ENCODE measurements at regions of chr20 and their contacts with region 1.

Region 1: GRCh38 chr20:37178839-37179670 is at the starts of genes MROH8 and RPN2:
- DNase-seq: peak; percentile 93
- H3K4me3 Mint-ChIP-seq: peak within 1 kb of the TSS; percentile 99
- H3K27ac Mint-ChIP-seq: peak within 1 kb of the TSS; percentile 96
- H3K4me1 Mint-ChIP-seq: peaks cover 32% of the 10 kb centered on the region
- H3K27me3 Mint-ChIP-seq: peaks cover 4% of the 10 kb centered on the region
- total RNA-seq, gene MROH8: 1.1 and 1.3 TPM in 2 replicates
- total RNA-seq, gene RPN2: 223 and 234 TPM in 2 replicates

Region 2: DNA sequence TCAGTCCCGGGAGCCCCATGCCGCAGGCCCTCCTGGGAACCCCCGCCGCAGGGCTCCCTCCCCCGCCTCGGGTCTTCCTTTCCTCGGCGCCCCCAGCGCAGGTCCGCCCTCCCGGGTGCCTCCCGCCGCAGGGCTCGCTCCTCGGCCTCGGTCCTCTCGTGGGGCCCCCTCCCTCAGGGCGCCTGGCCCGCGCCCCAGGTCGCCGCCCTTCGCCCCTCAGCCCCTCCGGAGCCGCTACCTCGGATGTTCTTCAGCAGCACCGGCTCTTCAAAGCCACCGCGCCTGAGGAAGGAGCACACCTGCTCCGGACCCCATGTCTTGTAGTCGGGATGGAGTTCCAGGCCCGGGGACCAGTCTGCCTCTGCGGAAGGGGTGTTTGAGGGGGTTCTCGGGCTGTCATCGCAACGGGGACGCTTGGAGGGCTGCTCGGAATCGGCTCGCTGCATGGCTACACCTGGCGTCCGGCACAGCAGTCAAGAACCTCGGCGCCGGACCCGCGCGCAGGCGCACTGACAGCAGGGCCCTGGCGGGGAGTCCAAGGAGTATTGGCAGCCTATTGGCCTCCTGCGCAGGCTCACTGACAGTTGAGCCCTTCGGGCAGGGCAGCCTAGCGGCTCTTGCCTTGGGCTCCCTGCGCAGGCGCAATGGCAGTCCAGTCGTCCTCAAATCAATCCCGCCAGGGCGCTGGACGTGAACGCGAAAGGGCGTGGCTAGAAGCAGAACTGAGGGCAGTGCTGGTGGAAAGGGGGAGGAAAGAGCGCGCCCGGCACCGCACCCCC is 227.7 kb before region 1 on chr20 and contains the start of gene SAMHD1:
- intact Hi-C with region 1: loop called (anchors 5 kb)
- DNase-seq: peak; percentile 90
- H3K4me3 Mint-ChIP-seq: peak within 1 kb of the TSS; percentile 92
- H3K27ac Mint-ChIP-seq: peak within 1 kb of the TSS; percentile 91
- H3K4me1 Mint-ChIP-seq: peaks cover 47% of the 10 kb centered on the region
- H3K27me3 Mint-ChIP-seq: no peaks in the 10 kb centered on the region
- total RNA-seq, gene SAMHD1: 55.0 and 59.9 TPM in 2 replicates

Region 3: DNA sequence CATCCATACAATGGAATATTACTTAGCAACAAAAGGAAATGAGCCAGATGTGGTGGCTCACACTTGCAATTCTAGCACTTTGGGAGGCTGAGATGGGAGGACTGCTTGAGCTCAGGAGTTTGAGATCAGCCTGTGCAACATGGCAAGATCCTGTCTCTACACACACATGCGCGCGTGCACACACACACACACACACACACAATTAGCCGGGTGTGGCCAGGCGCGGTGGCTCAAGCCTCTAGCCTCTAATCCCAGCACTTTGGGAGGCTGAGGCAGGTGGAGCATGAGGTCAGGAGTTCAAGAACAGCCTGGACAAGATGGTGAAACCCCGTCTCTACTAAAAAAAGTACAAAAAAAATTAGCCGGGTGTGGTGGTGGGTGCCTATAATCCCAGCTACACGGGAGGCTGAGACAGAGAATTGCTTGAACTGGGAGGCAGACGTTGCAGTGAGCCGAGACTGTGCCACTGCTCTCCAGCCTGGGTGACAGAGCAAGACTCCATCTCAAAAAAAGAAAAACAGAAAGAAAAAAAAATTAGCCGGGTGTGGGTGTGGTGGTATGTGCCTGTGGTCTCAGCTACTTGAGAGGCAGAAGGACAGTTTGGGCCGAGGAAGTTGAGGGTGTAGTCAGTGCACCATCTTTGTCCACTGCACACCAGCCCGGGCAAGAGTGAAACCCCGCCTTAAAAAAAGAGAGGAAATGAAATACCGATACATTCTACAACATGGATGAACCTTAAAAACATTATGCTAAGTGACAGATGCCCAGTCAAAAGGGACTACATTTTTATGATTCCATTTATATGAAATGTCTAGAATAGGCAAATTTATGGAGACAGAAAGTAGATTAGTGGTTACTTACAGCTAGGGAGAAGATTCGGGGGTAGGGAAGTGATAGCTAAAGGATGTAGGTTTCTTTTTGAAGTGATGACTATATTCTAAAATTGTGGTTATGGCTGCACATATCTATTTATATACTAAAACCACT is 135.8 kb before region 1 on chr20:
- intact Hi-C with region 1: loop called (anchors 2 kb)
- DNase-seq: peak; percentile 40
- H3K4me3 Mint-ChIP-seq: peak overlapping the region; percentile 72
- H3K27ac Mint-ChIP-seq: peak overlapping the region; percentile 87
- H3K4me1 Mint-ChIP-seq: peaks cover 45% of the 10 kb centered on the region
- H3K27me3 Mint-ChIP-seq: no peaks in the 10 kb centered on the region

Region 4: DNA sequence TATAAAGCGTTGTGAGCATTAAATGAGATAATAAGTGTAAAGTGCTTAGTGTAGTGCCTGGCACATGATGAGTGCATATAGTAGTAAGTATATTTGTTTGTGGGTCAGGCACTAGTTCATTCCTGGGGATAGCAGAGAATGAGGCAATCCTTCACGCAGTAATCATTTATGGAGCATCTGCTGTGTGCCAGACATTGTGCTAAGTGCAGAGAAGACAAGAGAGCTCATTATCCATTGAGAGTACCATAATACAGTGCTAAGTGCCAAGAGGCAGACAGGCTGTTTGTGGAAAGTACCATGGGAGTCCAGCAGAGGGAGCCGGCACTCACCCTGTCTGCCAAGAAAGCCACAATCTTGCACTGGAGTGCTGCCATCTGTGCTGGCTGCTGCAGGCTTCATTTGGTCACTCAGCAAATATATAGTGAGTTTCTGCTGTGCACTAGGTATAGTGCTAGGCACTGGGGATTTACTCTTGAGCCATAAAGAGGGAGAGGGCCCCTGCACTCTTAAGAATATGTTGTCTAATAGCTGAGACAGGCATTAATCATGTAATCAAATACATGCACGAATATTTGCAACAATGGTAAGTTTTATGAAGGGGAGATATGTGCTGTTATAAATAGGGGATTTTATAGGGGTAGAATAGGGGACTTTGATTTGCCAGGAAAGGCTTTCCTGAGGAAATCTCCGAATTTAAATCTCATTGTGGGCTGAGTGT is 13.2 kb after region 1 on chr20:
- intact Hi-C with region 1: loop called (anchors 1 kb)
- DNase-seq: peak; percentile 55
- H3K4me3 Mint-ChIP-seq: no peak overlapping the region
- H3K27ac Mint-ChIP-seq: peak overlapping the region; percentile 43
- H3K4me1 Mint-ChIP-seq: peaks cover 70% of the 10 kb centered on the region
- H3K27me3 Mint-ChIP-seq: no peaks in the 10 kb centered on the region

Region 5: DNA sequence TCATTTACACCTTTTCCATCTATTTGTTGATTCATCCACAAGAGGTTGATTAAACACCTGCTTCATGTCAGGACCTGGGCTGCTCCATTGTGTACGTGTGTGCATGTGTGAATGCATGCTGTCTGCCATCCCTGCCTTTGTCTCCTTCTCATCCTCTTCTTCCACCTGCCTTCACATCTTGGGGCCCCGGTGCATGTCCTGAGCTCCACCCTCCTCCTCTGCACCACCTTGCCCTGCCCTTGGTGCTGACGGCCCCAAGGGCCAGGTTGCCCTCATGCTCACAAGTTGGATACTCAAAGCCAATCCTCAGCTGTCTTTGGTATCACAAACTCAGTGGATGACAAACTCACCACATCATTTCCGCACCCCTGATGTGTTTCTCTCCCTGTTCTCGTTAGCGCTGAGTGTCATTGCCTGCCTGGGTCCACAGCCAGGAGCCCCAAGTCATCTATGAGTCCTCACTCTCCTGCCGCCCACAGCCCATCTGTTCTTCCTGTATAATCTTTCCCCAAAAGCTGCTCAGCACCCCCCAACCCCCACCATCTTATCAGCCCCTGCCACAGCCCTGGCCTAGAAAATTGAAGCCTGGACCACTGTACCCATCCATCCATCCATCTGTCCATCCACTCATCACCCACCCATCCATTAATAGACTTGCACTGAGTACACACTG is 251.9 kb after region 1 on chr20:
- intact Hi-C with region 1: no loop called
- DNase-seq: no peak
- H3K4me3 Mint-ChIP-seq: no peak overlapping the region
- H3K27ac Mint-ChIP-seq: no peak overlapping the region
- H3K4me1 Mint-ChIP-seq: no peaks in the 10 kb centered on the region
- H3K27me3 Mint-ChIP-seq: no peaks in the 10 kb centered on the region

Region 6: DNA sequence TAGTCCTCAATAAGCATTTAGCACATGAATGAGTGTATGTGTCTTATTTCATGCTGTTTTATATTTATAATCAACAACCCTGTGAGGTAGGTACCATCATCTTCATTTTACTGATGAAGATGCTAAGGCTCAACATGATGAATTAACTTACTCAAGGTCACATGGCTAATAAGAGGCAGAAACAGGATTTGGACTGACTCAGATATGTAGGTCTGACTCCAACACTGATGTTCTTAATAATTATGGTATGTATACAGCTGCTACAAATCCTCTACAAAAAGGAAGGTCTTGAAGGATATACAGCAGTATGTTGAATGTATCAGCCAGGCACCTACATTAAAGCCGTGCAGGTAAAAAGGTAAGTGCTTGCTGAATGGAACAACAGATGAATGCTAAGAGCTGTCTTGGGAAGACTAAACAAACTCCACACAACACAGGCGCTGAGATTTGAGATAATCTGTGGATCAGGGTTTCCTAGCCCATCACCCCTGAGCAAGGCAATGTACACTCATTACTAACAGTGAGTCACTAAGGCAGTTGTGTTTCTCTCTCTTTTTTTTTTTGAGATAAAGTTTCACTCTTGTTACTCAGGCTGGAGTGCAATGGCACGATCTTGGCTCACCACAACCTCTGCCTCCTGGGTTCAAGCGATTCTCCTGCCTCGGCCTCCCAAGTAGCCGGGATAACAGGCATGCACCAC is 822.3 kb after region 1 on chr20:
- intact Hi-C with region 1: loop called (anchors 10 kb)
- DNase-seq: no peak
- H3K4me3 Mint-ChIP-seq: no peak overlapping the region
- H3K27ac Mint-ChIP-seq: peak overlapping the region; percentile 55
- H3K4me1 Mint-ChIP-seq: peaks cover 36% of the 10 kb centered on the region
- H3K27me3 Mint-ChIP-seq: no peaks in the 10 kb centered on the region